Mammary epithelial cell (primary cell): ENCODE measurements at regions of chr5 and their contacts with region 1.

Region 1: GRCh38 chr5:74851684-74852353 is 14.4 kb downstream of the FAM169A start:
- DNase-seq: peak; percentile 66
- H3K4me3 ChIP-seq: peak overlapping the region; percentile 35 to 74 (median 56)
- H3K27ac ChIP-seq: peak overlapping the region; percentile 87
- H3K4me1 ChIP-seq: peaks cover 12% of the 10 kb centered on the region
- H3K27me3 ChIP-seq: no peaks in the 10 kb centered on the region
- CTCF ChIP-seq: no peak

Region 2: DNA sequence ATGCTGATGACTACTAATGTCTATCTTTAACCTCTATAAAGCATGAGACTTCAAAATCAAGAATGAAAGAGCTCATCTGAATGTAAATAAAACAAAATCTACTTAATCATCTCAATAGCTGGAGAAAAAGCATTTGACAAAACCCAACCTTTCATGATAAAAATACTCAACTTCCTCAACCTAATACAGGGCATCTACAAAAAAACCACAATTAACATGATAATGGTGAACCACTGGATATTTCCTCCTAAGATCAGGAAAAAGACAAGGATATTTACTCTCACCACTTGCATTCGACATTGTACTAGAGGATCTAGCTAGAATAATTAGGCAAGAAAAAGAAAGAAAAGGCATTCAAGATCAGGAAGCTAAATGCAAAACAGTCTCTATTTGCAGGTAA is 34.9 kb before region 1 on chr5:
- CTCF ChIA-PET with region 1: no interaction called
- dilution Hi-C with region 1: no loop called
- in situ Hi-C with region 1: no loop called
- intact Hi-C with region 1: loop called (anchors 5 kb)
- DNase-seq: no peak
- H3K4me3 ChIP-seq: no peak overlapping the region
- H3K27ac ChIP-seq: no peak overlapping the region
- H3K4me1 ChIP-seq: peaks cover under 1% of the 10 kb centered on the region
- H3K27me3 ChIP-seq: no peaks in the 10 kb centered on the region
- CTCF ChIP-seq: no peak

Region 3: DNA sequence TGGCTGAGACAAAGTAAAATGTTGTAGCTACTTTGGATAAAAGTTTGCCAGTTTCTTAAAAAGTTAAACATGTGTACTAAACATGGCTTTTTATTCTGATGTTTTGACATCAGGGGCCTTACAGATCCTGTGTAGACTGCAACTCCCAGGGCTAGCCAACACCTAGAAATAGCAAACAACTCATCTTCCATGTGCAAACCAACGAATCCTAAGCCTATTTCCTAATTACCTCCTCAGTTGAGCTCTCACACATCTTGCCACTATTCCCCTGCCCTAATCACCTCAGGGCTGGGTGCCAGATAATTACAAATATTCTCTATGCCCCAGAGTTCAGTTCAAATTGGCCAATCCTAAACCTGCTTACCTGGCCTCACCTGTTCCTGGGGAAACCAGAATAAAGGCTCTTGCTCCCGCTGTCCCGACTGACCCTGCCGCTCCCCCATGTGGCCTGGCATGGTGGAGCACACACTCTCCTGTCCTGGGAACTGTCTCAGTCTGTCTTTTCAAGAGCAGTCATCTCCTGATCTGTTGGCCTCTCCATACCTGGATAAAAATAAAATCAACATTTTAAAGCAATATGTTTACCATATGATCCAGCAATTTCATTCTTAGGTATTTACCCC is 51.5 kb after region 1 on chr5:
- CTCF ChIA-PET with region 1: no interaction called
- dilution Hi-C with region 1: no loop called
- in situ Hi-C with region 1: no loop called
- intact Hi-C with region 1: no loop called
- DNase-seq: peak; percentile 81
- H3K4me3 ChIP-seq: no peak overlapping the region
- H3K27ac ChIP-seq: no peak overlapping the region
- H3K4me1 ChIP-seq: peaks cover 6% of the 10 kb centered on the region
- H3K27me3 ChIP-seq: no peaks in the 10 kb centered on the region
- CTCF ChIP-seq: peak; percentile 89 to 97